ENCODE measurements at regions of chr13 and their contacts with region 1.

Region 1: DNA sequence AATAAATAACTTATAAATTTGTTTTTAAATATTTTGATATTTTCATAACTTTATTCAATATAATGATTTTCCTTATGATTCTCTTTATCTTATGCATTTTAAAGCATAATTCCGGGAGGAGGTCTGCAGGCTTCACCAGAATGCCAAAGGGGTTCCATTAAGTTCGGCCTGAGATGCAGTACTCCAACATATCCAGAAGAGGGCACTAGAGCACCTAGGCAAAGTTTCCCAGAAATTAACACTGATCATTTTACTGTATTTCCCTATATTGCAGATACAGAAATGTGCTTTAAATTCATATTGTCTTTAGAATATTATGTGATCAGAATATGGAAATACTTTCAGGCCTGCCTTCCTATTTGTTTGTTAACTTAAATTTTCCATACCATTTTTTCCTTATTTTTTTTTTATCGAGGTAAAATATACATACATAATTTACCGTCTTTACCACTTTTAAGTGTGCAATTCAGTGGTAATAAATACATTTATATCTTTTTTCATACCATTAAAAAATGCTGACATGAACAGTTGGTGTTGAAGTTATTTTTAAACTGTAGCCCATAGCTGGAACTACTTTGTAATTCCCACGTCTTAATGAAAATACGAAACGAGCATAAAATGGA is 58.9 kb upstream of the TM9SF2 start:
- DNase-seq: peak; percentile 64
- ATAC-seq: peak; percentile 33; the same call in 1 of the 2 replicates
- H3K4me3 ChIP-seq: no peak overlapping the region
- H3K27ac ChIP-seq: no peak overlapping the region
- H3K4me1 ChIP-seq: peaks cover 9% of the 10 kb centered on the region; the same call in 1 of the 2 replicates
- H3K27me3 ChIP-seq: no peaks in the 10 kb centered on the region
- CTCF ChIP-seq: peak; percentile 72

Region 2: DNA sequence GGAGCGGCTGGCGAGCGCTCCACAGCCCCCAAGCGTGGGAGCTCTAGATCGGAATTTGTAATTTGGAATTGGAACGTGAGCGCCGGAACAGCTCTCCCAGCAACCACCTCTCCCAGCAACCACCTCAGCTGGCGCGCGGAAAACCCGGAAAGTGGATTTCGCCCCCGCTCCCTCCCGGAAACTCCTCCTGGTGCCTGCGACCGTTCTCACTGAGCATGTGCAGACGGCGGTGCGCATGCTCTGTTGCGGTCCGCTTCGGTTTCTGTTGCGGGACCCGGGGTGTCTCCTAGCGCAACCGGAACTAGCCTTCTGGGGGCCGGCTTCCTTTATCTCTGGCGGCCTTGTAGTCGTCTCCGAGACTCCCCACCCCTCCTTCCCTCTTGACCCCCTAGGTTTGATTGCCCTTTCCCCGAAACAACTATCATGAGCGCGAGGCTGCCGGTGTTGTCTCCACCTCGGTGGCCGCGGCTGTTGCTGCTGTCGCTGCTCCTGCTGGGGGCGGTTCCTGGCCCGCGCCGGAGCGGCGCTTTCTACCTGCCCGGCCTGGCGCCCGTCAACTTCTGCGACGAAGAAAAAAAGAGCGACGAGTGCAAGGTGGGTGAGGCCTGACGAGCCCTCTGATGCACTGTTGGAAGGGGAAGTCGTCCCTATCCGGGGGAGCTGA is 58.9 kb after region 1 on chr13 and contains the start of gene TM9SF2:
- CTCF ChIA-PET with region 1: interaction called, 3 read pairs
- POLR2A ChIA-PET with region 1: interaction called, 3 read pairs
- intact Hi-C with region 1: loop called (anchors 1 kb)
- DNase-seq: peak; percentile 92
- ATAC-seq: peak; percentile 63
- H3K4me3 ChIP-seq: peak within 1 kb of the TSS; percentile 93
- H3K27ac ChIP-seq: peak within 1 kb of the TSS; percentile 69
- H3K4me1 ChIP-seq: peaks cover 52% of the 10 kb centered on the region
- H3K27me3 ChIP-seq: no peaks in the 10 kb centered on the region
- CTCF ChIP-seq: no peak
- total RNA-seq, gene TM9SF2: 80.7 and 84.6 TPM in 2 replicates

Region 3: GRCh38 chr13:99617474-99618255 is 175.3 kb after region 1 on chr13:
- CTCF ChIA-PET with region 1: no interaction called
- POLR2A ChIA-PET with region 1: no interaction called
- intact Hi-C with region 1: loop called (anchors 10 kb)
- DNase-seq: peak; percentile 46
- ATAC-seq: peak; percentile 67
- H3K4me3 ChIP-seq: no peak overlapping the region
- H3K27ac ChIP-seq: no peak overlapping the region
- H3K4me1 ChIP-seq: no peaks in the 10 kb centered on the region
- H3K27me3 ChIP-seq: no peaks in the 10 kb centered on the region
- CTCF ChIP-seq: peak; percentile 76